GM10248 (cell line): ENCODE measurements at regions of chr3 and their contacts with region 1.

Region 1: DNA sequence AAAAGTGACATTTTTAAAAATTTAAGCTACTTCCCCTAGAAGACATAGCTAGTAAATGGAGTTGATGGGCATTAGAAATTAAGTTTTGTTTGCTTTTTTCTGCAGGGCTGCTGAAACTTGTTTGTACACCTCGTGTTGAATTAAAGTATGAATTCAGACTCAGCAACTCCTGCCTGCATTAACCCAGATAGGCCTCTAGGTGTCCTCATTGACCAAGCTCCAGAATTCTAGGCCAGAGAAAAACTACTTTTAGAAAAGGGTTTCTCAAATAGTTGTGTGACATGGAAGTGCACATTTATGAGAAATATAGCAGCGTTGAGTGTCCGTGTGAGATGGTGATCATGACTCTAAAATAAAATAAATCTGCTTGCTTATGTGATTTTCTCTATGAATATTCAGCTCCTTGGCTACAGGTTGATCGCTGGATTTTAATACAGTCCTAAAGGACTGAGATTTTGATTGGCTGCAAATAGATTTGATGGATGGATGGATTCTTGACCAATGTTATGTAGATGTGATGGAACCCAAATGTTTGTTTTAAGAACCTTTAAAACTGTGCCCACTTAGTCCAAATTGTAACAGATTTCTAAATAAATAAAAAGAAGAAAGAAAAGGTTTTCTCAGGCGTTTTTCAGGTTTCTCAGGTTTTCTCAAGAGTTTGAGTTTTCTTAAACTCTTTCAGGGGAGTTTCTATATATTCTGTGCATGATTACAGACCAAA is 39.4 kb upstream of the LMOD3 start:
- DNase-seq: peak; percentile 62
- CTCF ChIP-seq: peak; percentile 91

Region 2: GRCh38 chr3:68963891-68964290 is 197.9 kb before region 1 on chr3:
- CTCF ChIA-PET with region 1: no interaction called
- POLR2A ChIA-PET with region 1: no interaction called
- DNase-seq: no peak
- CTCF ChIP-seq: no peak

Region 3: DNA sequence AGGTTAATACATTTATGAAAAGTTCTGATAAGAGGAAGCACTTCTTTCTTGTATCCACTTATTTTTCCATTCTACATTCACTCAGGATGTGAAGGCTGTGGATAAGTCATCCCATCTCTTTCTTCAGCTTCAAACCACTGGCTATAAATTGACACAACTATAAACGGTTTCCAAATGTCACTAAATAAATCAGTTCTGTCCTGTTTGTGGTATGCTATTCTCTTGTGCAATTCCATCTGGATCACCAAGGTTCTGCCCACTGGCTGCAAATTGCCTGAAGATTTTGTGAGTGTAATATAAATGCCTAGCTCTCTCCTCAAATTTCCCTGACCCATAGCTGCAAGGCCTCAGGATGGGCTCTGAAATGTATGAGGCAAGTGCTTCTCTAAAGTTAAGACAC is 32.2 kb before region 1 on chr3:
- CTCF ChIA-PET with region 1: interaction called, 14 read pairs
- POLR2A ChIA-PET with region 1: no interaction called
- DNase-seq: no peak
- CTCF ChIP-seq: no peak

Region 4: GRCh38 chr3:69174871-69175737 is 13.4 kb after region 1 on chr3:
- CTCF ChIA-PET with region 1: interaction called, 43 read pairs
- POLR2A ChIA-PET with region 1: no interaction called
- DNase-seq: no peak
- CTCF ChIP-seq: no peak

Region 5: DNA sequence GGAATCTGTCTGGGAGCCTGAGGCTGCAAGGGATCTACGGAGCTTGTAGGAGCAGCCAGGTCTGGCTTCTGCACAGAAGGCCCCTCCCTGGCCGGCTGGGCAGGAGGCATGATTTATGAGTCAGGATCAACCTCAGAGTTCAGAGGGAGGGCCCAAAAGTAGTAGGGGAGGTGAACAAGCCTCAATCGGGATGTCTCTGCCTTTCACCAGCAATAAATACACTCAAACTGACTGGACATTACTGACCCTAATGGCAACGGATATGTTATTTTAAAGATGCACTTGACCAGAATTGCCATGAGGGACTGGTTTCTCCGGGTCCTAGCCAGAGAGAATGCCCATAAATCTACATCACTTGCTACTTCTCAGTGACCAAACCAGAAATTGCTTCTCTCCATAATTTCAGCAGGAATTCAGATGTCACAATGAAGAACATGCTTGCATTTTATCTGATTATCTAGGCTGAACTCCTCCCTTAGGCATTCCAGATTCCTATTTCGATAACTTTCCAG is 70.2 kb after region 1 on chr3:
- CTCF ChIA-PET with region 1: interaction called, 10 read pairs
- POLR2A ChIA-PET with region 1: no interaction called
- DNase-seq: no peak
- CTCF ChIP-seq: no peak

Region 6: DNA sequence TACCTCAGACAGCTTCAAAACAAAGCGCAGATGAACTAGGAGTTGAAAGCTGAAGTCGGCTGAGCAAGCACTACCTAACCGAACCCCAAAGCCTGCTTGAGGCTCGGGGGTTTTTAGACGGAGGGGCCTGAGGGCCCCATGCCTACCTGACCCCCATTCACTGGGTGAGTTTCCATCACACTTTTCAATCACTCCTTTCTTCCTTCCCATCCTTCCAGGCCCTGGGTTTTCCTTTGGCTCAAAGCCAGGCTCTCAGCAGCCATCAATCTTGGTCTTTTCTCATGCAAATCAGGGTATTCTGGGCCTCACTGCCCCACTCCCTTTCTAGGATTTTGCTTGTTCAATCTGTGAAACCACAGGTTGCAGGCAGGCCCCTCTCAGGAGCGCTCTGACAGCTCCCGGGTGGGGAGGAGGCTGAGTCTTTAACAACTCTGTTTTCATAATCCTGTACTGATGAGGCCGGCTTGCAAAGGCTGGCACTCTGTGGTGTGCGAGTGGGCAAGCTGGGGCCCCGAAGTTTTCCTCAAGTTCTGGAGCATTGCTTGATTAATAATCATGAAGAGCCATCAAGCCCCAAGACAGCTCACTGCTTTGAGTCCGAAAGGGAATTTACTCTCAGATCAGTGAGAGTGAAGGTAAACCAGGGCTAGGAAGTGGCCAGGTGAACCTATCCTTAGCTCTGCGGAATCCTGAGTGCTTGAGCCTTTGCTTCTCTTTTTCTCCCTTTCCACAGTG is 126.6 kb after region 1 on chr3:
- CTCF ChIA-PET with region 1: interaction called, 26 read pairs
- POLR2A ChIA-PET with region 1: no interaction called
- DNase-seq: peak; percentile 34
- CTCF ChIP-seq: no peak

Region 7: GRCh38 chr3:69410250-69410649 is 248.5 kb after region 1 on chr3:
- CTCF ChIA-PET with region 1: interaction called, 39 read pairs
- POLR2A ChIA-PET with region 1: no interaction called
- DNase-seq: peak; percentile 43
- CTCF ChIP-seq: peak; percentile 90

Region 8: GRCh38 chr3:69671082-69671952 is 509.6 kb after region 1 on chr3:
- CTCF ChIA-PET with region 1: interaction called, 20 read pairs
- POLR2A ChIA-PET with region 1: no interaction called
- DNase-seq: peak; percentile 44
- CTCF ChIP-seq: peak; percentile 53